ENCODE measurements at regions of chr13 and their contacts with region 1.

Region 1: DNA sequence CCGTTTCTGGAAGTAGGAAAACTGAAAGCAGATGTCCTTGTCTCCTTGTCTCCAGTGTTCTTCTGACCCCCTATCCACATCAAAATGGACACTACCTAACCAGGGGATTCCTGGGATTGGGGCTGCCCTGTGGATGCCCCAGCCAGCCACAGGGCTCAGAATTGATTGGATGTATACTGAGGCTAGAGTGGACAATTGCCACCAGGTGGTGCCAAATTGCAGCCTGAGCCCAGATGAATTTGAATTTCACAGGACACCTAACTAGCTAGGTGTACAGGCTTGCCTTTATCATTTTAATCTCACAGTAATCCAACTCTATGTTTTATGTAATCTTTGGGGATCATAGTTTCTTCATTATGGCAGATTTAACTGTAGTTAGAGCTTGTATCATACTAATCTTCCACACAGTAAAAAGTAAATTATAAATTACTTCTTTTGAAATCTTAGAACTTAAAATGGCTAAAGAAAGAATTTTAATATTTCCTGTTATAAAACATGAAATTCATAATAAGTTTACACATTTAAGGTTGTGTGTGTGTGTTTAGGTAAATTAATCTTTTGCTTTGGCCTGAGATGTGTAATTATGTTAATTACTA is 58.0 kb downstream of the PIBF1 start:
- DNase-seq: peak; percentile 77 to 80
- H3K4me3 ChIP-seq: no peak overlapping the region
- H3K4me3 Mint-ChIP-seq: no peak overlapping the region
- H3K27ac Mint-ChIP-seq: no peak overlapping the region
- H3K4me1 ChIP-seq: no peaks in the 10 kb centered on the region; the same call in 1 of the 2 replicates
- H3K4me1 Mint-ChIP-seq: no peaks in the 10 kb centered on the region
- H3K27me3 ChIP-seq: no peaks in the 10 kb centered on the region
- H3K27me3 Mint-ChIP-seq: no peaks in the 10 kb centered on the region
- CTCF ChIP-seq: peak; percentile 89 to 90

Region 2: GRCh38 chr13:72908416-72908815 is 68.5 kb after region 1 on chr13:
- CTCF ChIA-PET with region 1: no interaction called
- POLR2A ChIA-PET with region 1: no interaction called
- intact Hi-C with region 1: no loop called
- DNase-seq: no peak
- H3K4me3 ChIP-seq: no peak overlapping the region
- H3K4me3 Mint-ChIP-seq: no peak overlapping the region
- H3K27ac Mint-ChIP-seq: no peak overlapping the region
- H3K4me1 ChIP-seq: no peaks in the 10 kb centered on the region
- H3K4me1 Mint-ChIP-seq: no peaks in the 10 kb centered on the region
- H3K27me3 ChIP-seq: no peaks in the 10 kb centered on the region
- H3K27me3 Mint-ChIP-seq: no peaks in the 10 kb centered on the region
- CTCF ChIP-seq: no peak

Region 3: DNA sequence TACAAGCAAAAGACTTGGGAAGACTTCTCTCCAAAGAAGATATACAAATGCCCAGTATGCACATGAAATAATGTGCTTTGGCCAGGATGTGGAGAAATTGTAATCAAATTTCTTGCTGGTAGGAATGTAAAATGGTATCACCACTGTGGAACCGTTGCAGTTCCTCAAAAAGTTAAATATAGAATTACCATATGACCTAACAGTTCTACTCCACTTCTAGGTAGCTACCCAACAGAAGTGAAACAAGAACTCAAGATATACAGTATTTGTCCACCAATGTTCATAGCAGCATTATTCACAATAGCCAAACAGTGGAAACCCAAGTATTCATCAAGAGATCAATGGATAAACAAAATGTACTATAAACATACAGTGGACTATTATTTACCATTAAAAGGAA is 123.8 kb after region 1 on chr13:
- CTCF ChIA-PET with region 1: no interaction called
- POLR2A ChIA-PET with region 1: no interaction called
- intact Hi-C with region 1: loop called (anchors 2 kb)
- DNase-seq: no peak
- H3K4me3 ChIP-seq: no peak overlapping the region
- H3K4me3 Mint-ChIP-seq: no peak overlapping the region
- H3K27ac Mint-ChIP-seq: no peak overlapping the region
- H3K4me1 ChIP-seq: peaks cover 25% of the 10 kb centered on the region
- H3K4me1 Mint-ChIP-seq: peaks cover 13% of the 10 kb centered on the region
- H3K27me3 ChIP-seq: no peaks in the 10 kb centered on the region
- H3K27me3 Mint-ChIP-seq: no peaks in the 10 kb centered on the region
- CTCF ChIP-seq: no peak

Region 4: DNA sequence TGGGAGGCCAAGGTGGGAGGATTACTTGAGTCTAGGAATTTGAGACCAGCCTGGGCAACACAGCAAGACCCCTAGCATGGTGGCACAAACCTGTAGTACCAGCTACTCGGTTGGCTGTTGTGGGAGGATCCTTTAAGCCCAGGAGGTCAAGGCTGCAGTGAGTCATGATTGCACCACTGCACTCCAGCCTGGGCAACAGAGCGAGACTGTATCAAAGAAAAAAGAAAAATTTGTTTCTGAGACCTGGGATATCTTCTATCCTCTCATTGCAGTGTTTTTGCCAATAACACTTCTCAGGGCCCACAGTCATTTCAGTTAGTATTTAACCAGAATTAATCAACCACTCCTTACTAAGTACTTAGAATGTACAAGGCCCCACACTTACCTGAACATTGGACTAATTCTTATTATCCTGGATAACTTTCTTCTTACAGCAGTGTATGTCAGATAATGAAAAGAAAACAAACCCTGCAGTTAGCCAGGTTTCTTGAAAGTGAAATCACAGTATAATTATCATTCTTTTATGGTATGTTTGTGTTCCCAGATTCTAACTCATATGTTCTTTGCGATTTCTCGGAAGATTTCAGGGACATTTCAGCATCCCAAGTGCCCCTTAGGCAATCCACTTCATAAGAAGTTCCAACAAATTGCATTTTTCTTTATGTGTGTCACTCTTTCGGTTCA is 143.3 kb after region 1 on chr13:
- CTCF ChIA-PET with region 1: no interaction called
- POLR2A ChIA-PET with region 1: no interaction called
- intact Hi-C with region 1: loop called (anchors 2 kb)
- DNase-seq: peak; percentile 38 to 48
- H3K4me3 ChIP-seq: no peak overlapping the region
- H3K4me3 Mint-ChIP-seq: no peak overlapping the region
- H3K27ac Mint-ChIP-seq: peak overlapping the region; percentile 36
- H3K4me1 ChIP-seq: peaks cover 51% of the 10 kb centered on the region
- H3K4me1 Mint-ChIP-seq: no peaks in the 10 kb centered on the region
- H3K27me3 ChIP-seq: no peaks in the 10 kb centered on the region
- H3K27me3 Mint-ChIP-seq: no peaks in the 10 kb centered on the region
- CTCF ChIP-seq: no peak

Region 5: DNA sequence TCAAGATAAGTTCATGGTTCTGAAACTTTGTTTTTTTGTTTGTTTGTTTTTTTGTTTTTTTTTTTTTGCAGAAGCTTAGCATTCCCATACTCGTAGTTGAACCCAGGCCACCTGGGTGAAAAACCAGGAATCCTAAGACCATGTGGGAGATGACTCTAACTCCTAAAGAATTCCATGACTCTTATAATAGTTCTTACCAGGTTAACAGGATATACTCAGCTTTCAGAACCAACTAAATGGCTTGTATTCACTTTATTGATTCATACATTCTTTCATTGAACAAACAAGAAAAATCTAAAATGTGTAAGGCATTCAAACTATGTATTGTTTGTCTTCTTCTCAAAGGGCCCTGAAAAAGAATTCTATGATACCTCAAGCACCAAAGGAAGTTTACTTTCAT is 178.4 kb after region 1 on chr13:
- CTCF ChIA-PET with region 1: no interaction called
- POLR2A ChIA-PET with region 1: no interaction called
- intact Hi-C with region 1: no loop called
- DNase-seq: no peak
- H3K4me3 ChIP-seq: no peak overlapping the region
- H3K4me3 Mint-ChIP-seq: no peak overlapping the region
- H3K27ac Mint-ChIP-seq: peak overlapping the region; percentile 66
- H3K4me1 ChIP-seq: peaks cover 22% of the 10 kb centered on the region
- H3K4me1 Mint-ChIP-seq: peaks cover 19% of the 10 kb centered on the region
- H3K27me3 ChIP-seq: no peaks in the 10 kb centered on the region
- H3K27me3 Mint-ChIP-seq: no peaks in the 10 kb centered on the region
- CTCF ChIP-seq: no peak

Region 6: DNA sequence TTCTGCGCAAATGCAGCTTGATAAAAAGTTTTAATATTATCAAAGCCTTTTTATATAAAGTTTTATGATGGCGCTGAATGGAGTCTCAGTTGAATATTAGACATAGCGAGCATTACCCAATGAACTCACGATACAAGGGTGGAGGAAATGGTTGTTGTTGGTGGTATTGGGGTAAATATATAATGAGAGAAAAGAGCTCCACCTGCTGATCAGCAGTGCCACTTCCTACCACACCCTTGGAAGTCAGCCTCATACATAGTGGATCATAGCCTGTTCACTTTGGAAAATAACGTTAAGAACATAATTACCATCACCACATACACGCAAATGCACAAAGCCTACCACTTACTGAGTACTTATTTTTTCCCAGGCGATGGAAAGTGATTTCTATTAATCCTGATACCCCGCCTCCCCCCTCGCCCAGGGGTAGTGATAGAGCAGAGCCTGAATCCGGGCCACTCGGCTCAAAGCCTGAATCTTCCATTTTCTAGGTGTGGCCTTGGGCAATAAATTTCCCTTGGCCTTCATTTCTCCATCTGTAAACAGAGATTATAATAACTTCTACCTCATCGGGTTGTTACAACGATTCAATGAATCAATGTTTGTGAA is 577.2 kb after region 1 on chr13:
- CTCF ChIA-PET with region 1: no interaction called
- POLR2A ChIA-PET with region 1: no interaction called
- intact Hi-C with region 1: loop called (anchors 1 kb)
- DNase-seq: peak in 1 of 2 experiments; percentile 55
- H3K4me3 ChIP-seq: no peak overlapping the region
- H3K4me3 Mint-ChIP-seq: no peak overlapping the region
- H3K27ac Mint-ChIP-seq: no peak overlapping the region
- H3K4me1 ChIP-seq: peaks cover 19% of the 10 kb centered on the region
- H3K4me1 Mint-ChIP-seq: peaks cover 15% of the 10 kb centered on the region
- H3K27me3 ChIP-seq: no peaks in the 10 kb centered on the region
- H3K27me3 Mint-ChIP-seq: no peaks in the 10 kb centered on the region
- CTCF ChIP-seq: peak; percentile 38 to 45

Region 7: DNA sequence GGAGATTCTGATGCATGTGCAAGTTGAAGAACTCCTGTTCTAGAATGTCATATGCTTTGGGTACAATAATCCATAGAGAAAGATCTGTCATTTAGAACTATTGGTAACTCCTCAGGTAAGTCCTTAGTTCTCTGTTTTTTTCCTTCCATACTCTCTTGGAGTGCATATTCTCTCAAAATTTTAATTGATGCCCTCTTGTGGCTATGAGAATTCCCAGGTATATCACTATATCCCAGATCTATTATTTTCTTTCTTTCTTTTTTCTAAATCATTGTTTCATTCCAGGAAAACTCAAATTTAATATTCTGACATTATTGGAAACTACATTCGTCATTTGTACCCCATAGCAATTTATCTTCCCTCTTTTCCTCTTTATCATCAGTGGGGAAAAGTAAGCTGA is 704.2 kb after region 1 on chr13:
- CTCF ChIA-PET with region 1: no interaction called
- POLR2A ChIA-PET with region 1: no interaction called
- intact Hi-C with region 1: loop called (anchors 10 kb)
- DNase-seq: no peak
- H3K4me3 ChIP-seq: no peak overlapping the region
- H3K4me3 Mint-ChIP-seq: no peak overlapping the region
- H3K27ac Mint-ChIP-seq: no peak overlapping the region
- H3K4me1 ChIP-seq: no peaks in the 10 kb centered on the region
- H3K4me1 Mint-ChIP-seq: no peaks in the 10 kb centered on the region
- H3K27me3 ChIP-seq: no peaks in the 10 kb centered on the region
- H3K27me3 Mint-ChIP-seq: no peaks in the 10 kb centered on the region
- CTCF ChIP-seq: no peak